ENCODE measurements at regions of chr7 and their contacts with region 1.

Region 1: DNA sequence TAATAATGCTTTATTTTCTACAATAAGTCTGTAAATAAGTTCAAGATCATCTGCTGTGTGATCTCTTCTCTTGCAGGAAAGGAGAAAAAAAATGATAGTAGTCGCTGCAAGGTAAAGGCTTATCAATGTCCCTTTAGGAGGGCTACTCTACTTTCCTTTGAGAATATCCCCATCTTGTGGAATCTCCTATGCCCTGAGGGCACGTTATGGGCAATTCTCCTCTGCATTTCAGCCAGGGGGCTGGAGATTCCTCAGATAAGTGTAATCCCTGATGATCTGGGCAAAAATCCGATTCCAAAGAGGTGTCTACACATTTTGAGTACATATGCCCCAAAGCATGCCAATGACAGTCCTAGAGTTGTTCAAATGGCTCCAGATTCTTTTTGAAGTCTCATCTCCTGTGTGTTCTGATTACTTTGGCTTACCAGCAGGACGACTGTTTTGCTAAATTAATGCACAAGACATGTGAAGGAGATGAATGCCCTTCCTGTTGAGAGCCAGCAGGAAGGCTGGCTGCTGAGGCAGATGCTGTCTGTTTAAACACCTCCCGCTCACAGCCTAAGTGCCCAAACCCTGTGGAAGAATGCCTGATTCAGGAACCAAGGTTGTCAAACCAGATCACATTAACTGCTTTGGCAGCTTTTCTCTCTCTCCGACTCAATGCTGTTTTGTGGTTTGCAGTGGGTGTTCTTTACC is 171.2 kb upstream of the COL1A2 start:
- DNase-seq: peak; percentile 77
- H3K4me3 ChIP-seq: no peak overlapping the region
- H3K27ac ChIP-seq: no peak overlapping the region
- H3K4me1 ChIP-seq: peaks cover 8% of the 10 kb centered on the region
- H3K27me3 ChIP-seq: no peaks in the 10 kb centered on the region
- CTCF ChIP-seq: peak; percentile 55 to 67
- POLR2A ChIP-seq: no peak

Region 2: DNA sequence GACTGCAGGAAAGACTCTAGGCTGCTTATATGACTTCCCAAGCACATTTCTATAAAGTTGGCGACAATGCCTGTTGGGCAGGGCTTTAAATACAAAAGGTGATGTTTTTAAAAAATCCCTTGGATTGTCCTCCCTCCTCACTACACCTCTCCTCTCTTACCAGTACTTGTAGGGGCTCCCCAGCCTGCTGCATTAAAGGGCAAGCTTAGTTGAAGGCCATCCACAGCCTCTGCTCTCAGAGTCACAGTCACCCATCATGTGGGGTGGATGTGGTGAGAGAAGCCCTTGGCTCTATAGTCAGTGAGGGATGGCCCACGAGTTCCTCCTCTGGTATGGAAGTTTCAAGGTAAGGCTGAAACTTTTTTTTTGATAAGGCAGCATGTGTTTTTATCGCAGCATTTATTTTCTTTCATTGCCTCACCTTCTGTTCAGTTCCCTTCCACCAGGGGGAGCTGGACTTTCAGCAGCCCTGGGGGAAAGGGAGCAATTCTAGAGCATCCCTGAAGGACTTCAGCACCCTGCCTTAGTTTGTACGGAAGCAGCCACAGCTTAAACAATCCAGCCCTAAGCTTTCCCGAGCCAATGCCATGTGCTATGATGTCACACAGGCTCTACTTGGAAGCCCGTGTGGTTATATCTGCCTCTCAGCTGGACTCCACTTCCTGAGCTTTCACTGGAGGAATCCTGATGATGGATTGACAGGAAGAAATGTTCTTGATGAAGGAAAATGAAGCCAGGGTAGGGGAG is 780.9 kb before region 1 on chr7:
- CTCF ChIA-PET with region 1: interaction called, 3 read pairs
- POLR2A ChIA-PET with region 1: no interaction called
- dilution Hi-C with region 1: no loop called
- intact Hi-C with region 1: loop called (anchors 1 kb)
- DNase-seq: peak; percentile 26
- H3K4me3 ChIP-seq: no peak overlapping the region
- H3K27ac ChIP-seq: no peak overlapping the region
- H3K4me1 ChIP-seq: no peaks in the 10 kb centered on the region
- H3K27me3 ChIP-seq: peaks cover 3 to 4% of the 10 kb centered on the region in 2 experiments
- CTCF ChIP-seq: peak; percentile 63 to 70
- POLR2A ChIP-seq: no peak

Region 3: GRCh38 chr7:93622036-93623033 is 601.2 kb before region 1 on chr7:
- CTCF ChIA-PET with region 1: no interaction called
- POLR2A ChIA-PET with region 1: no interaction called
- dilution Hi-C with region 1: no loop called
- intact Hi-C with region 1: loop called (anchors 1 kb)
- DNase-seq: no peak
- H3K4me3 ChIP-seq: no peak overlapping the region
- H3K27ac ChIP-seq: no peak overlapping the region
- H3K4me1 ChIP-seq: no peaks in the 10 kb centered on the region
- H3K27me3 ChIP-seq: no peaks in the 10 kb centered on the region
- CTCF ChIP-seq: peak in 1 of 2 donors; percentile 24
- POLR2A ChIP-seq: no peak

Region 4: DNA sequence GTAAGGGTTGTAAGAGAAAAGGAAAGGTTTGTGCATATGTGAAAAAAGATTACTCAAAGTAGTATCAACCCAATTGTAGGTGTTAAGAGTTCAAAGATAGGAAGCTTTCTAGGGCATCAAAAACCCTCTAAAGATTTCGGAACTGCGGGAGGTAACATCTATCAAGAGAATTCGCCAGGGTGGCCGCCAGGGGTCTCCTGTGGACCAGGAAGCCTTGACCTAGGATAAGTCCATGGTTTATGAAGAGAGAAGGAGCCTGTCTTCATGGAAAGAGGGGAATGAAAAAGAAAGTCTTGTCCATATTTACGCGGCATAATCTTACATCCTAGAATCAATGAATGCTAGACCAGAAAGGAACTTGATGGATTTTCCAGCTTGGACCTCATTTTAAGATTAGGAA is 508.3 kb before region 1 on chr7:
- CTCF ChIA-PET with region 1: interaction called, 21 read pairs
- POLR2A ChIA-PET with region 1: no interaction called
- dilution Hi-C with region 1: no loop called
- intact Hi-C with region 1: loop called (anchors 1 kb)
- DNase-seq: peak; percentile 58
- H3K4me3 ChIP-seq: no peak overlapping the region
- H3K27ac ChIP-seq: no peak overlapping the region
- H3K4me1 ChIP-seq: no peaks in the 10 kb centered on the region
- H3K27me3 ChIP-seq: peaks cover 15 to 26% of the 10 kb centered on the region in 2 experiments
- CTCF ChIP-seq: peak; percentile 71 to 72
- POLR2A ChIP-seq: no peak

Region 5: GRCh38 chr7:93799750-93800357 is 423.7 kb before region 1 on chr7:
- CTCF ChIA-PET with region 1: interaction called, 37 read pairs
- POLR2A ChIA-PET with region 1: no interaction called
- dilution Hi-C with region 1: no loop called
- intact Hi-C with region 1: loop called (anchors 1 kb)
- DNase-seq: peak; percentile 43
- H3K4me3 ChIP-seq: no peak overlapping the region
- H3K27ac ChIP-seq: no peak overlapping the region
- H3K4me1 ChIP-seq: no peaks in the 10 kb centered on the region
- H3K27me3 ChIP-seq: no peaks in the 10 kb centered on the region
- CTCF ChIP-seq: peak; percentile 32 to 45
- POLR2A ChIP-seq: no peak

Region 6: DNA sequence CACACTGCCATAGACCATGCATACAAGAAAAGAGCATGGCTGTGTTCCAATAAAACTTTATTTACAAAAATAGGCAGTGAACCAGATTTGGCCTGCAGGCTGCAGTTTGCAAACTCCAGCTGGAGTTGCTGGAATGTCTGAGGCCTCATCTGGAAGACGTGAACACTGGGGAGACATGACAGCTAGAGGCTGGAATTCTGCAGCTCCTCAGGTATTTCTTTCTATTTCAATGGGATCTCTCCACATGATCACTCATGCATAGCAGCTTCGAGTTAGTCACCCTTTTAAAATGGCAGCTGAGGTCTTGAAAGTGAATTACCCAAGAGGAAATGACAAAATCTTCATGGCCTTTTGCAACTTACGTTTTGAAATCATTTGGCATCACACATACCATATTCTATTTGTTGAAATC is 166.7 kb before region 1 on chr7:
- CTCF ChIA-PET with region 1: no interaction called
- POLR2A ChIA-PET with region 1: no interaction called
- dilution Hi-C with region 1: no loop called
- intact Hi-C with region 1: no loop called
- DNase-seq: no peak
- H3K4me3 ChIP-seq: no peak overlapping the region
- H3K27ac ChIP-seq: no peak overlapping the region
- H3K4me1 ChIP-seq: no peaks in the 10 kb centered on the region
- H3K27me3 ChIP-seq: peaks cover 66 to 95% of the 10 kb centered on the region in 2 experiments
- CTCF ChIP-seq: no peak
- POLR2A ChIP-seq: no peak

Region 7: GRCh38 chr7:94160719-94161435 is 62.6 kb before region 1 on chr7:
- CTCF ChIA-PET with region 1: no interaction called
- POLR2A ChIA-PET with region 1: no interaction called
- dilution Hi-C with region 1: no loop called
- intact Hi-C with region 1: no loop called
- DNase-seq: no peak
- H3K4me3 ChIP-seq: no peak overlapping the region
- H3K27ac ChIP-seq: no peak overlapping the region
- H3K4me1 ChIP-seq: peaks cover 17% of the 10 kb centered on the region
- H3K27me3 ChIP-seq: no peaks in the 10 kb centered on the region
- CTCF ChIP-seq: no peak
- POLR2A ChIP-seq: no peak

Region 8: DNA sequence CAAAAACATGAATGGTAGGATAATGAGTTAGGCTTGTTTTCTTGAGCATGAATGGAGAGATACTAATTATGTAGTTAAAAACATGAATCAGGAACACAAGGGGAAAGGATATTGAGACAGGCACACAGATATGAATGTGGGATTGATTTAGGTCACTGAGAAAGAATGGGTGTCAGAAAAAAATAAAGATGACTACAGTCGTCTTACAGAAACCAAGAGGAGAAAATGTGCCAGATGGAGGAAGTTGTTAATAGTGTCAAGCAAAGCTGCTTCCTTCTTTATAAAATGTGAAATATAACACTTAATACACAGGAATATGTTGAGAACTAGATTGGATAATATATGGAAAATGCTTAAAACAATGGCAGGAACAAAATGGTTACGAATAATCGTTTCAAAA is 46.1 kb before region 1 on chr7:
- CTCF ChIA-PET with region 1: interaction called, 5 read pairs
- POLR2A ChIA-PET with region 1: no interaction called
- dilution Hi-C with region 1: no loop called
- intact Hi-C with region 1: loop called (anchors 1 kb)
- DNase-seq: peak; percentile 96
- H3K4me3 ChIP-seq: no peak overlapping the region
- H3K27ac ChIP-seq: peak overlapping the region; percentile 89
- H3K4me1 ChIP-seq: peaks cover 67% of the 10 kb centered on the region
- H3K27me3 ChIP-seq: no peaks in the 10 kb centered on the region
- CTCF ChIP-seq: no peak
- POLR2A ChIP-seq: no peak

Region 9: DNA sequence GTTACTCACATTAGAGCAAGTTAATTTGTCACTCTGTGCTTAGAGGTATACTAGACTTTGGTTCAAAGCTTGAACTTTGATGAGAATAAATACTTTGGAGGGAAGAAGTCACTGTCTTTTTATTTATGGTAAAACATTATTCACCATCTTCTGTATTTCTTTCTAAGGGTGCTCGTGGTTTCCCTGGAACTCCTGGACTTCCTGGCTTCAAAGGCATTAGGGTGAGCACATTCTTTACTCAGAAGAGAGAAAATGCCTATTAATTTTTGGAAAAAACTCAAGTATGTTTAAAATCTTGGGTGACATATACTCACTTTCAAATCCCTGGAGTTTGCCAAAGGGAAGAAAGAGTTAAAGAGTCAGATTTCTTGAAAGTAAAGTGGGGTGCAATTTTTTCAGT is 182.0 kb after region 1 on chr7:
- CTCF ChIA-PET with region 1: no interaction called
- POLR2A ChIA-PET with region 1: no interaction called
- dilution Hi-C with region 1: no loop called
- intact Hi-C with region 1: no loop called
- DNase-seq: no peak
- H3K4me3 ChIP-seq: no peak overlapping the region
- H3K27ac ChIP-seq: no peak overlapping the region
- H3K4me1 ChIP-seq: peaks cover 7% of the 10 kb centered on the region
- H3K27me3 ChIP-seq: no peaks in the 10 kb centered on the region
- CTCF ChIP-seq: no peak
- POLR2A ChIP-seq: no peak

Region 10: GRCh38 chr7:94509879-94510581 is 286.5 kb after region 1 on chr7:
- CTCF ChIA-PET with region 1: no interaction called
- POLR2A ChIA-PET with region 1: no interaction called
- dilution Hi-C with region 1: no loop called
- intact Hi-C with region 1: no loop called
- DNase-seq: peak; percentile 69
- H3K4me3 ChIP-seq: peak overlapping the region; percentile 59 to 80 (median 60)
- H3K27ac ChIP-seq: peak overlapping the region; percentile 65
- H3K4me1 ChIP-seq: peaks cover 20% of the 10 kb centered on the region
- H3K27me3 ChIP-seq: no peaks in the 10 kb centered on the region
- CTCF ChIP-seq: peak in 1 of 2 donors; percentile 47
- POLR2A ChIP-seq: peak; percentile 55